Right lobe of liver (tissue), 6 donors: ENCODE measurements at regions of chr17 and their contacts with region 1.

Region 1: GRCh38 chr17:79988185-79988971 is 47.3 kb downstream of the TBC1D16 start:
- DNase-seq: peak; percentile 84 to 93 (median 87)
- ATAC-seq: peak; percentile 47 to 68 (median 54)
- H3K4me3 ChIP-seq: peak overlapping the region in 1 of 3 donors; percentile 0
- H3K27ac ChIP-seq: peak overlapping the region; percentile 66 to 91 (median 85)
- H3K4me1 ChIP-seq: peaks cover 2 to 69% (median 33%) of the 10 kb centered on the region in 4 donors
- H3K27me3 ChIP-seq: no peaks in the 10 kb centered on the region
- CTCF ChIP-seq: no peak
- POLR2A ChIP-seq: peak; percentile 53

Region 2: DNA sequence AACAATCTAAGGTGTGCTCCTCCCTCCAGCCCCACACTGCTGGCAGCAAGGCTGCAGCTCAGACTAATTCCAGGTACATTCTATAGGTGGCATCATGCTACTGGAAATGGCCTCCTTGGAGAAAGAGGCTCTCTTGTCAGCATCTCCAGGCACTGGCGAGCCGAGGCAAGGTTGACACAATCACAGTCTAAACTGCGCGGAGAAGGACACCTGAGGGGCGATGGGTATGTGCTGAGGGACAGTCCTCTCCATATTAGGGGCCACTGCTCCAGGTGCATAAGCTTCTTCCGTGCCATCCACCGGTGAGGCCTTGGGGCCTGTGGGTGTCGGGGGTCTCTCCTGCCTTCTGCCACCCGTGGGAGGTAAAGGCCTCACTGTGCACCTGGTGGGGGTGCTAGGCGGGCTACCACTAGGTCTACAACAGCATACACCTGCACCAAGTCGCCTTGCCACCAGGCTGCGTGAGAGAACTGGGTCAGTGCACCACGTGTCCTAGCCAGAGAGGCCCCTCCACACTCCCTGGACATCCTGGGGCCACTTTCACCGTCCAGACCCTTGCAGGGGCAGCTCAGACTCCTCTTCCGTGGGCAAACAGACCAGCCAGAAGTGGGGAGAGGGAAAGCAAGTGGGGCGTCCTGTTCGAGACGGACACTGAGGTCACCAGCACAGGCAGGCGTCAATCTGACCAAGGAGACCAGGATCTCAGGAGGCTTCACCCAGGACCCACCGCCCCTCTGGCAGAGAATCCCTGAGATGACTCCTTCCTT is 179.4 kb before region 1 on chr17:
- intact Hi-C with region 1: loop called in 1 of 2 experiments (anchors 10 kb)
- DNase-seq: peak in 1 of 3 donors; percentile 36
- ATAC-seq: peak; percentile 74 to 81 (median 74)
- H3K4me3 ChIP-seq: no peak overlapping the region
- H3K27ac ChIP-seq: no peak overlapping the region
- H3K4me1 ChIP-seq: peaks cover 0 to 13% (median 0%) of the 10 kb centered on the region in 4 donors
- H3K27me3 ChIP-seq: peaks cover 26 to 77% of the 10 kb centered on the region in 2 donors
- CTCF ChIP-seq: peak; percentile 37 to 57 (median 47)
- POLR2A ChIP-seq: no peak

Region 3: GRCh38 chr17:79839363-79840268 is 148.8 kb before region 1 on chr17 and contains the start of gene CBX4:
- intact Hi-C with region 1: loop called in 1 of 2 experiments (anchors 10 kb)
- DNase-seq: peak; percentile 98
- ATAC-seq: peak; percentile 66 to 81 (median 70)
- H3K4me3 ChIP-seq: peak within 1 kb of the TSS; percentile 68 to 71 (median 68)
- H3K27ac ChIP-seq: peak within 1 kb of the TSS; percentile 88 to 99 (median 92)
- H3K4me1 ChIP-seq: peaks cover 0 to 62% (median 15%) of the 10 kb centered on the region in 4 donors
- H3K27me3 ChIP-seq: peaks cover 0 to 8% of the 10 kb centered on the region in 2 donors
- CTCF ChIP-seq: peak; percentile 89 to 97 (median 93)
- POLR2A ChIP-seq: peak; percentile 87
- total RNA-seq, gene CBX4: 8.9 to 21.9 (median 15.1) TPM

Region 4: GRCh38 chr17:79923974-79924638 is 64.3 kb before region 1 on chr17:
- intact Hi-C with region 1: loop called in 1 of 2 experiments (anchors 10 kb)
- DNase-seq: peak in 1 of 3 donors; percentile 52
- ATAC-seq: peak in 2 of 4 donors; percentile 9 to 12
- H3K4me3 ChIP-seq: no peak overlapping the region
- H3K27ac ChIP-seq: no peak overlapping the region
- H3K4me1 ChIP-seq: peaks cover 0 to 15% (median 5%) of the 10 kb centered on the region in 4 donors
- H3K27me3 ChIP-seq: no peaks in the 10 kb centered on the region
- CTCF ChIP-seq: peak; percentile 15 to 33 (median 19)
- POLR2A ChIP-seq: no peak

Region 5: DNA sequence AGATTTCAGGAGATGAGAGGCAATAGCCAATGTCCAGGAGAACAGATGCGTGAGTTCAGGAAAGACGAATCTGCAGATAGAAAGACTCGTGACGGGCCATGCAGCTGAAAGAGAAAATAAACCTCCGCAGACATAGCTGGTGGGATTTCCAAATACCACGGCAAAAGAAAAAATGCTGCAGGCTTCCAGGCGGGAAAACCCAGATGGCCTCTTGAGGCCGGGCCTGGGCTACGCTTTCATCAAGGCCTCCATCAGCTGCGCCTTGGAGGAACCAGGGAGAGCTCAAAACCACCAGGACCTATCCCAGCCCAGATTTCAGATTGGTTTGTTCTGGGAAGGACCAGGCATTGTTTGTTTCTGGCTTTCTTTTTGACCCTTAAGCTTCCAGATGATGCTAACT is 64.7 kb after region 1 on chr17:
- intact Hi-C with region 1: no loop called
- DNase-seq: no peak
- ATAC-seq: no peak
- H3K4me3 ChIP-seq: no peak overlapping the region
- H3K27ac ChIP-seq: no peak overlapping the region
- H3K4me1 ChIP-seq: no peaks in the 10 kb centered on the region
- H3K27me3 ChIP-seq: no peaks in the 10 kb centered on the region
- CTCF ChIP-seq: no peak
- POLR2A ChIP-seq: no peak

Region 6: DNA sequence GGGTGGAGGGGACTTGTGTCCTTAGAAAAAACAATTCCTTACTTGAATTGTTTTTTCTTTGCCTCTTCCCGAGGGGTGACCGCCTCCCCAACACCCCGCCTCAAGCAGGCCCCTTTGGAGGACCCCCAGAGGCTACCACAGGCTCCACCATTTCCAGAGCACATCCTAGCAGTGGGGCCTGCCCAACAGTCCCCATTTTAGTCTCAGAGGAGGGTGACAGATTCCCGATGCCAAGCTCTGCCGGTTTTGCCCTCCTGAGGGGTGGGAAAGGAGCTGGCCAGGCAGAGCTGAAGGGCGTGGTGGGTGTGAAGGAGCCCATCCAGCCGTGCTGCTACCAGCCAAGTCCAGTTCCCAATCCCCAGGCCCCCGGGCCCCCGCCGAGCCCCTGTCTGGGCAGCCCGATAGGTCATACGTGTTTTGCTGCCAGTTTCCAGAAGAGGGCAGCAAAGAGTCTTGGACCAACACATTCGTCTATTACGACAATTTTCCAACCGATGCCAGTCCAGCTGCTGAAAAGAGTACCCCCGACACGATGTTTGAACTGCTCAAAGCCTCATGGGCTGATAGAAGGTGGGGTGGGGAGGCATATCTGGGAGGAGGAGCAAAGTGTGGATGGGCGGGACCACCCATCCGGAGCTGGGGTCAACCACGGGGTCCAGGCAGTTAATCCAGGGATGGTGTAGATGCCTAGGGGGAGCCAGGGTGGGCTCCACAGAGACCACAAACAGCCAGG is 94.2 kb after region 1 on chr17:
- intact Hi-C with region 1: no loop called
- DNase-seq: peak in 1 of 3 donors; percentile 70
- ATAC-seq: peak; percentile 72 to 90 (median 86)
- H3K4me3 ChIP-seq: no peak overlapping the region
- H3K27ac ChIP-seq: no peak overlapping the region
- H3K4me1 ChIP-seq: peaks cover 0 to 6% (median 0%) of the 10 kb centered on the region in 4 donors
- H3K27me3 ChIP-seq: no peaks in the 10 kb centered on the region
- CTCF ChIP-seq: peak; percentile 57 to 80 (median 76)
- POLR2A ChIP-seq: no peak